ENCODE measurements at regions of chr6 and their contacts with region 1.

Region 1: DNA sequence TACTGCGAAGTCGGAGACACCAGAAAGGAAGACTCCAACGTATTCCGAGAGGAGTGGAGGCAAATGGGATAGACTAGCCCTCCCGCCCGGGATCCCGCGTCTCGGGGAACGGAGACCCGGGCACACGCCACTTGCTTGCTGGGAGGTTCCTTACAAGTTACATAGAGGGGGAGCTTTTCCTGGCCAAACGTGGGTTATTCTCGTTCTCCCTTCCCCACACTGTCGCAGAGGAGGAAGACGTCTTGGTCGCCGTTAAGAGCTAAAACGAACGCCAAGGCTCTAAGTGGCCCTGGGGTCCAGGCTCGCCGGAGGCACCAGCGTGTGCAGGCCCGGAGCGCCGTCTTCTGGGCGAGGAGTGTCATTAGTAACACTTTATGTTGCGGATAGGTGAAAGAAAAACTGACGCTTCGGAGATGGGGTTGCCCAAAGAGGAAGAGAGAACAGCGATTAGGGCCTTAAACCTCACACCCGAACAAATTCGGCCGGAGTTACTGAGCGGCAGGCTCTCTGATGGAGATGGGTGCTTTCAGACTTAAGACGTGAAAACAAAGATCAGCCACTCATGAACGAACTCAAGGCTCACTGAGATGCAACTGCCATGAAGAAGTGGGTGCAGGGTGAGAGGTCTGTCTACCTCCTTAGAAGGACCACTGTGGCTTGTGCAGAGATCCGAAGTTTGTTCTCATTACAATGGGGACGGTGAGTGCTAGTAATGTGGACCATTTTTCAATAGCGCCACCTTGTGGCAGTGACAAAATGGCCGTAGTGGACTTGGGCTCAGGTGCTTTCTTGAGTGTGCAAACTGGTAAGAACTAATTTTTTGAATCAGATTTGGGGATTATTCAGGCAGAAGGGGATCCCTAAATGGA is 11.7 kb upstream of the ZNF311 start:
- DNase-seq: peak; percentile 79
- ATAC-seq: peak; percentile 99

Region 2: DNA sequence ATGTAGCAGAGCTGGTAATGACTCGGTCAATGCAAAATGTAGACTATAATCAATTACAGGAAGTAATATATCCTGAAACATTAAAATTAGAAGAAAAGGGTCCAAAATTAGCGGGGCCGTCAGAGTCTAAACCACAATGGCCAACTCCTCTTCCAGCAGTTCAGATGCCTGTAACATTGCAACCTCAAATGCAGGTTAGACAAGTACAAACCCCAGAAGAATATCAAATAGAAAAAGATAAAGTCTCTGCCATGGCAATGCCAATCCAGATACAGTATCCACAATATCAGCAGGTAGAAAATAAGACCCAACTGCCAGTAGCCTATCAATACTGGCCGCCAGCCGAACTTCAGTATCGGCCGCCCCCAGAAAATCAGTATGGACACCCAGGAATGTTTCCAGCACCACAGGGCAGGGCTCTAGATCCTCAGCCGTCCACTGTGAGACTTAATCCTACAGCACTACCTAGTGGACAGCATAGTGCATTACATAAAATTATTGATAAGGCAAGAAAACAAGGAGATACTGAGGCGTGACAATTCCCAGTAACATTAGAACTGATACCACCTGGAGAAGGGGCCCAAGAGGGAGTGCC is 332.8 kb before region 1 on chr6:
- intact Hi-C with region 1: loop called (anchors 2 kb)
- DNase-seq: no peak
- ATAC-seq: no peak

Region 3: DNA sequence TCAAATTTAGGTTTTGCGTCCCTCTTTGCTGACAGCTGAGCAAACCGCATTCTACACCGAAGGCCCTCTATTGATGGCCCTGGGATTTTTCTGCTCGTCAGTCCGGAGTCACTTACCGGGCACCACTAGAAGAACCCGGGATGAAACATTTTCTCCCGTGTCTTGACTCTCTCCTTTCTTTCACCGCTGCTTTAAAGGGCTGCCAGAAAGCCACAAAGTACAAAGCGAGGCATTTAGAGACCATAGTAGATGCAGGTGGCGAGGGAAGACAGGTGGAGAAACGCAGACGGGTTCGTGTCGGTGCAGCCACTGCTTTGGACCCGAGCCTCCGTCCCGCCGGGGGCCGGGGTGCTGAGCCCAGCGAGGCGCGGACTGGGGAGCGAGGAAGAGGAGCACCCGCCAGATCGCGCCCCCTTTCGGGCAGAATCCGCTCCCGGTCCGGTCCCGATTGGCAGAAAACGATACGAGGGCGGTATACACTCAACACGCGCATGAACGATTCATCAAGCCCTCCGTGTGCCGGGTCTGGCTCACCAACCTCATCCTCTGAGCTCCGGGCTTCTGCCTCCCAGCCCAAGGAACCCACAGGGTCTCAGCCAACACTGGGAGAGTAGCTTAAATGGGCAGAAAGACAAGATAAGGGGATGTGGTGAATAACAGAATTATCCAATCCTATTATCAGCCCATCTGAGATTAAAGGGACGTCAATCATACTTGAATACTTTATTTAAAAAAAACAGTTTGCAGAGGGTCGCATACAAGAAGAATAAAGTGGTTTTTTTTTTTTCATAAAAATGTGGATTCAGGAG is 178.0 kb before region 1 on chr6:
- intact Hi-C with region 1: loop called (anchors 5 kb)
- DNase-seq: peak; percentile 87
- ATAC-seq: peak; percentile 93

Region 4: GRCh38 chr6:28910902-28911690 is 105.7 kb before region 1 on chr6:
- intact Hi-C with region 1: no loop called
- DNase-seq: no peak
- ATAC-seq: no peak

Region 5: GRCh38 chr6:29071831-29072723 is 55.3 kb after region 1 on chr6:
- intact Hi-C with region 1: no loop called
- DNase-seq: no peak
- ATAC-seq: no peak